WTC11 (cell line): ENCODE measurements at regions of chr12 and their contacts with region 1.

Region 1: GRCh38 chr12:74801625-74802024 is 264.0 kb downstream of the ATXN7L3B start:
- DNase-seq: no peak
- ATAC-seq: no peak
- H3K4me3 Mint-ChIP-seq: no peak overlapping the region
- H3K27ac Mint-ChIP-seq: no peak overlapping the region
- H3K4me1 Mint-ChIP-seq: no peaks in the 10 kb centered on the region
- H3K27me3 Mint-ChIP-seq: peaks cover 3% of the 10 kb centered on the region; the same call in 1 of the 2 replicates
- CTCF ChIP-seq: no peak

Region 2: DNA sequence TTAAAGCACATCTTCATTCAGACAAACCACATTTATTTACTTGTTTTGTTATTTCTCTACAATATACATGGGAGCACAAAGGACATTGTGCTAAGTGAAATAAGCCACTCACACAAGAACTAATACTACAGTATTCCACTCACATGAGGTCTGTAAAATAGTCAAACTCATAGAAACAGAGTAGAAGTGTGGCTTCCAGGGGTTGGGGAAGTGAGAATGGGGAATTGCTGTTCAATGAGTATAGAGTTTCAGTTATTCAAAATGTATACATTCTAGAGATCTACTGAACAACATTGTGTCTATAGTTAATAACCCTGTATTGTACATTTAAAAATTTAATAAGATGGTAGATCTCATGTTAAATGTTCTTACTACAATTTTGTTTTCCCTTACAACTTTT is 175.2 kb before region 1 on chr12:
- CTCF ChIA-PET with region 1: no interaction called
- POLR2A ChIA-PET with region 1: no interaction called
- DNase-seq: no peak
- ATAC-seq: no peak
- H3K4me3 Mint-ChIP-seq: no peak overlapping the region
- H3K27ac Mint-ChIP-seq: no peak overlapping the region
- H3K4me1 Mint-ChIP-seq: no peaks in the 10 kb centered on the region
- H3K27me3 Mint-ChIP-seq: no peaks in the 10 kb centered on the region; the same call in 1 of the 2 replicates
- CTCF ChIP-seq: no peak

Region 3: DNA sequence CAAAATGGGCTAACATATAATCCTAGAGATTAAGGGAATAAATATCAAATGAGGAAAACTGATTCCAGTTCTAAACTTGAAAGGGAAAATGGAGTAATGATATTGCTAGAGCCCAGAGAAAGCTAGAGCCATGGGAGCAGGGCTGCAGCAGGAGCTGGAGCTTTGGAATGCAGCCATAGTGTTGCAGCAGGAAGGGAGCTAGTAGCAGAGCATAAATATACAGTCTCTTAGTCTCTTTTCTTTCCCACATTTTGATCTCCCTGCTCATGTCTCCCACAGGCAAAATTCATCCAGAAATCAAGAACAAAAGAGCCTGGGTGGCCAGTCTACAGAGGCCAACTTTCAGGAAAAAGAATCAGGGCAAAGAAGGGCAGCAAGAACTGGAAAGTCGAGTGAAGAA is 10.3 kb before region 1 on chr12:
- CTCF ChIA-PET with region 1: interaction called, 19 read pairs
- POLR2A ChIA-PET with region 1: no interaction called
- DNase-seq: no peak
- ATAC-seq: peak; percentile 86
- H3K4me3 Mint-ChIP-seq: no peak overlapping the region
- H3K27ac Mint-ChIP-seq: peak overlapping the region; percentile 78; the same call in 1 of the 2 replicates
- H3K4me1 Mint-ChIP-seq: peaks cover 15% of the 10 kb centered on the region
- H3K27me3 Mint-ChIP-seq: no peaks in the 10 kb centered on the region
- CTCF ChIP-seq: no peak